ENCODE measurements at regions of chr15 and their contacts with region 1.

Region 1: GRCh38 chr15:75647370-75648155 is at the start of gene SNX33:
- DNase-seq: peak; percentile 84
- H3K4me3 ChIP-seq: peak within 1 kb of the TSS; percentile 71 to 90 (median 82)
- H3K27ac ChIP-seq: peak within 1 kb of the TSS; percentile 82
- H3K4me1 ChIP-seq: peaks cover 49% of the 10 kb centered on the region
- H3K27me3 ChIP-seq: no peaks in the 10 kb centered on the region
- CTCF ChIP-seq: peak; percentile 12 to 58
- total RNA-seq, gene SNX33: 28.2 to 41.4 TPM

Region 2: DNA sequence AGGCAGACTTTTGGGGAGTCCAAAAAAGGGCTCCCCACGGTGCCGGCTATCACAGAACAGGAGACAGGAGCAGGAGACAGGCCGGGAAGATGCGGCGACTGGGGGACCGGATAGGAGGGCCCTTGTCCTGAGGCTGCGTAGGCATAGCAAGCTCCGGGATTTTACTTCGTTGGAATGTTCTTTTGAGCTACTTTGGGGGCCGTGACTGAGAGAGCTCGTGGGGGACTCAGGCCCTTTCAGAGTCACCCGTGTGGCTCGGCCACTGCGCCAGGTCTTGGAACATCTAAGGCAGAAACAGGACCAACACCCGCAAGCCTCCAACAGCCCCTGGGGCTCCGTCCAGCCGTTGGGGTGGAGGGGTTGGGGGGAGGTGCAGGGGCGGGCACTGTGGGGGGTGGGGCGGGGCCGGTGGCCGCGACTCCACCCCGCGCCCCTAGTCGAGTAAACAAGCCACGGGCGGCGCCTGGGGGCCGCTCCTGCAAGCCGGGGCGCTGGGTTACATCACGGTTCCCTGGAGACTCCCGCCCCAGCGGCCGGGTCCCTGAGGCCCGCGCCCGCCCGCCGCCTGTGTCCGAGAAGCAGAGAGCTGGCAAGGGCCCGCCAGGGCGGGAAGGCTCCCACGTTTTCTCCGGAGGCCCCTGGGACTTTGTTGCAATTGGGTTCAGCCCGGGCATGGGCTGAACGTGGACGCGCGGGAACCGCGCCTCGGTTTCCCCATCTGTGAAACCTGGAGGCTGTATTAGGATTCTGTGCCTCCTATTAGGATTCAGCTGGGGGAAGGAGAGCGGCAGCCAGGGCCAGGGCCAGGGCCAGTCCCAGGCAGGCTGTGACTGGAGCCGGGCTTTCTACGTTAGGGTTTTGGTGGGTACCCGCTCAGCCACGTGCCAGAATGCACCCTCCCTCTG is 469.1 kb before region 1 on chr15:
- CTCF ChIA-PET with region 1: no interaction called
- dilution Hi-C with region 1: no loop called
- in situ Hi-C with region 1: no loop called
- intact Hi-C with region 1: no loop called
- DNase-seq: no peak
- H3K4me3 ChIP-seq: no peak overlapping the region
- H3K27ac ChIP-seq: no peak overlapping the region
- H3K4me1 ChIP-seq: peaks cover 40% of the 10 kb centered on the region
- H3K27me3 ChIP-seq: no peaks in the 10 kb centered on the region
- CTCF ChIP-seq: no peak

Region 3: GRCh38 chr15:75666823-75667501 is 19.4 kb after region 1 on chr15:
- CTCF ChIA-PET with region 1: interaction called, 4 read pairs
- dilution Hi-C with region 1: no loop called
- in situ Hi-C with region 1: no loop called
- intact Hi-C with region 1: loop called (anchors 1 kb)
- DNase-seq: peak; percentile 99
- H3K4me3 ChIP-seq: no peak overlapping the region
- H3K27ac ChIP-seq: peak overlapping the region; percentile 98
- H3K4me1 ChIP-seq: peaks cover 61% of the 10 kb centered on the region
- H3K27me3 ChIP-seq: no peaks in the 10 kb centered on the region
- CTCF ChIP-seq: no peak

Region 4: GRCh38 chr15:76190834-76191538 is 543.4 kb after region 1 on chr15:
- CTCF ChIA-PET with region 1: no interaction called
- dilution Hi-C with region 1: no loop called
- in situ Hi-C with region 1: no loop called
- intact Hi-C with region 1: no loop called
- DNase-seq: peak; percentile 61
- H3K4me3 ChIP-seq: peak overlapping the region in 1 of 3 experiments; percentile 52
- H3K27ac ChIP-seq: no peak overlapping the region
- H3K4me1 ChIP-seq: peaks cover 8% of the 10 kb centered on the region
- H3K27me3 ChIP-seq: no peaks in the 10 kb centered on the region
- CTCF ChIP-seq: peak; percentile 85 to 93